GM12878 (cell line): ENCODE measurements at regions of chr10 and their contacts with region 1.

Region 1: GRCh38 chr10:43407576-43408330 is 1.2 kb downstream of the HNRNPF start:
- DNase-seq: no peak
- ATAC-seq: peak; percentile 61
- H3K4me3 ChIP-seq: peak overlapping the region; percentile 98
- H3K27ac ChIP-seq: peak overlapping the region; percentile 95
- H3K4me1 ChIP-seq: no peaks in the 10 kb centered on the region; the same call in 1 of the 2 replicates
- H3K27me3 ChIP-seq: no peaks in the 10 kb centered on the region
- CTCF ChIP-seq: peak in 2 of 3 experiments; percentile 23 to 45; a peak in 3 of 6 replicates
- EP300 ChIP-seq: no peak
- POLR2A ChIP-seq: peak; percentile 82
- RAD21 ChIP-seq: no peak

Region 2: GRCh38 chr10:42638055-42638820 is 769.5 kb before region 1 on chr10 and contains the start of gene ZNF33B:
- CTCF ChIA-PET with region 1: no interaction called
- POLR2A ChIA-PET with region 1: no interaction called
- RAD21 ChIA-PET with region 1: no interaction called
- SMC1A ChIA-PET with region 1: no interaction called
- in situ Hi-C with region 1: loop called (anchors 25 kb)
- intact Hi-C with region 1: no loop called
- DNase-seq: peak; percentile 92
- ATAC-seq: peak; percentile 98
- H3K4me3 ChIP-seq: peak within 1 kb of the TSS; percentile 89
- H3K27ac ChIP-seq: peak within 1 kb of the TSS; percentile 95
- H3K4me1 ChIP-seq: no peaks in the 10 kb centered on the region
- H3K27me3 ChIP-seq: no peaks in the 10 kb centered on the region
- CTCF ChIP-seq: no peak
- EP300 ChIP-seq: peak in 1 of 2 experiments; percentile 12; a peak in 1 of 4 replicates
- POLR2A ChIP-seq: peak; percentile 97
- RAD21 ChIP-seq: no peak
- polyA plus RNA-seq, gene ZNF33B: 5.3 to 6.2 TPM

Region 3: DNA sequence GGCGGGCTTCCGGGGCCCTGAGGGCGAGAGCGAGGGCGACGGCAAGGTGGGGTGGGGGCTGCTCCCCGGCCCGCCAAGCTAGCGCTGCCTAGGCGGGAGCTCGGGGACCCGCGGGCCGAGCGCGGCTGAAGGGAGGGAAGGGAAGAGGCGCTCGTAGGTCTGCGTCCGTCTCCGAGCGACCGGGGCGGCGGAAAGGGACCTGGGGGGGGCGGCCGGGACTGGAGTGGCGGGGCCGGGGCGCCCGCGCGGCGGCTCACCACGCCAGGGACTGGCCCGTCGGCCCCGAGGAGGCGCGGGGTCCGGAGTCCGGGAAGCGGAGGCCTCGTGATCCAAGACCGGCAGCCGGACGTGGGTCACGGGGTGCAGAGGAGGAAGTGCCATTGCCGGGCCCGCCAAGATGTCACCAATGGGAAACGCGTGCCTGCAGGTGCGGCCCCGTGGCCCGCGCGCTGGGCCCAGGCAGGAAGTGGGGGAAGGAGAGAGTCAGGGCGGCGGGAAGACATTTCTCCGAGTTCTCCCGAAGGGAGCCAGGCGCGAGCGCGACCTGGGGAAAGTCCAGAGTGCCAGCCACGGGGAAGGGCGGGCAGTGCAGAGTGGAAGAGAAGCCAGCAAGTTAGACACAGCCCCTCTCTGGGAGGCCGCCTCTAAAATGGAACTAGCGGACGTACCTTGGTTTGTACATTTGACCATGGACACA is 10.7 kb before region 1 on chr10:
- CTCF ChIA-PET with region 1: interaction called, 5 read pairs
- POLR2A ChIA-PET with region 1: interaction called, 19 read pairs
- RAD21 ChIA-PET with region 1: interaction called, 5 read pairs
- SMC1A ChIA-PET with region 1: interaction called, 5 read pairs
- in situ Hi-C with region 1: no loop called
- intact Hi-C with region 1: loop called (anchors 1 kb)
- DNase-seq: no peak
- ATAC-seq: peak; percentile 84
- H3K4me3 ChIP-seq: peak overlapping the region; percentile 66
- H3K27ac ChIP-seq: peak overlapping the region; percentile 90
- H3K4me1 ChIP-seq: peaks cover 35% of the 10 kb centered on the region
- H3K27me3 ChIP-seq: no peaks in the 10 kb centered on the region
- CTCF ChIP-seq: no peak
- EP300 ChIP-seq: no peak; a peak in 1 of 4 replicates
- POLR2A ChIP-seq: peak; percentile 82
- RAD21 ChIP-seq: no peak

Region 4: GRCh38 chr10:43436400-43437140 is 28.8 kb after region 1 on chr10 and contains the start of gene ZNF487:
- CTCF ChIA-PET with region 1: no interaction called
- POLR2A ChIA-PET with region 1: interaction called, 7 read pairs
- RAD21 ChIA-PET with region 1: interaction called, 3 read pairs
- SMC1A ChIA-PET with region 1: interaction called, 3 read pairs
- in situ Hi-C with region 1: no loop called
- intact Hi-C with region 1: loop called (anchors 2 kb)
- DNase-seq: no peak
- ATAC-seq: peak; percentile 98
- H3K4me3 ChIP-seq: peak within 1 kb of the TSS; percentile 74
- H3K27ac ChIP-seq: peak within 1 kb of the TSS; percentile 93
- H3K4me1 ChIP-seq: peaks cover 4% of the 10 kb centered on the region
- H3K27me3 ChIP-seq: no peaks in the 10 kb centered on the region
- CTCF ChIP-seq: peak in 2 of 3 experiments; percentile 22 to 58; a peak in 3 of 6 replicates
- EP300 ChIP-seq: peak in 1 of 2 experiments; percentile 32; a peak in 1 of 4 replicates
- POLR2A ChIP-seq: peak; percentile 92
- RAD21 ChIP-seq: peak; percentile 48
- polyA plus RNA-seq, gene ZNF487: 0.77 to 1.3 TPM

Region 5: GRCh38 chr10:44010873-44011602 is 603.3 kb after region 1 on chr10:
- CTCF ChIA-PET with region 1: no interaction called
- POLR2A ChIA-PET with region 1: no interaction called
- RAD21 ChIA-PET with region 1: no interaction called
- SMC1A ChIA-PET with region 1: no interaction called
- in situ Hi-C with region 1: loop called (anchors 25 kb)
- intact Hi-C with region 1: no loop called
- DNase-seq: peak; percentile 80
- ATAC-seq: peak; percentile 88
- H3K4me3 ChIP-seq: no peak overlapping the region
- H3K27ac ChIP-seq: peak overlapping the region; percentile 81
- H3K4me1 ChIP-seq: peaks cover 31% of the 10 kb centered on the region
- H3K27me3 ChIP-seq: no peaks in the 10 kb centered on the region; a peak in 1 of 4 replicates
- CTCF ChIP-seq: no peak
- EP300 ChIP-seq: peak in 1 of 2 experiments; percentile 14; a peak in 1 of 4 replicates
- POLR2A ChIP-seq: peak; percentile 61
- RAD21 ChIP-seq: no peak